PC-9 (cell line): ENCODE measurements at regions of chr20 and their contacts with region 1.

Region 1: DNA sequence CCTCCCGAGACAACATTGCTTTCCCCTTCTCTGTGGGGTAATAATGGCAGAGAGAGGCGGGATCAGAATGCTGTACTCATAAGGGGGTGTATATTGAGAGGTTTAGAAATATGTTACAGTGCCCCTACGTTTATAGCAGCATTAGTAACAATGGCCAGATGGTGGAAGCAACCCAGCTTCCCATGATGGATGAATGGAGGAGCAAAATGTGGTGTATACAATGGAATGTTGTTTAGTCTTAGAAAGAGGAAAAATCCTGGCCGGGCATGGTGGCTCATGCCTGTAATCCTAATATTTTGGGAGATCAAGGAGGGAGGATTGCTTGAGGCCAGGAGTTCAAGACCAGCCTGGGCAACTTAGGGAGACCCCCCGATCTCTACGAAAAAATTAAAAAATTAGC is 12.9 kb downstream of the BANF2 start:
- DNase-seq: no peak
- H3K4me3 ChIP-seq: no peak overlapping the region
- H3K27ac ChIP-seq: no peak overlapping the region
- H3K4me1 ChIP-seq: no peaks in the 10 kb centered on the region
- H3K27me3 ChIP-seq: no peaks in the 10 kb centered on the region; the same call in 1 of the 2 replicates
- CTCF ChIP-seq: no peak

Region 2: GRCh38 chr20:17752459-17752858 is 39.8 kb after region 1 on chr20:
- CTCF ChIA-PET with region 1: no interaction called
- POLR2A ChIA-PET with region 1: interaction called, 10 read pairs
- intact Hi-C with region 1: no loop called
- DNase-seq: no peak
- H3K4me3 ChIP-seq: no peak overlapping the region
- H3K27ac ChIP-seq: no peak overlapping the region
- H3K4me1 ChIP-seq: peaks cover 4% of the 10 kb centered on the region; the same call in 1 of the 2 replicates
- H3K27me3 ChIP-seq: peaks cover 41% of the 10 kb centered on the region
- CTCF ChIP-seq: no peak

Region 3: DNA sequence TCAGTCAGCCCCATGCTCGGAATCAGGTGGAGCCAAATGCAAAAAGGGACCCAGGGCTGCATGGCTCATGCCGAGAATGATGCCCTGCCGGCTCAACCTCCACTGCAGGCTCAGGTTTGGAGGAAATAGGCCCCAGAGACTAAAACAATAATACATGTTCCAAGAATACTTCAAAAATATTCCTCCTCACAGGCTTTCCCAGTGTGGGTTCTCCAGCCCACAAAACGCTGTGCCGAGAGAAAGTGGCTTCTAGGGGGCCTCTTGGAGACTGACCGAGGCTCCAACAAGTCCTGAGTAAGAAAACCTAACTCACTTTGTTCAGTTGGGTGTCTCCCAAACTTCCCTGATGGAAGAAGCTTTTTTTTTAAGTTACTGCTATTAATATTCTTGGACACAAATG is 60.9 kb after region 1 on chr20:
- CTCF ChIA-PET with region 1: no interaction called
- POLR2A ChIA-PET with region 1: no interaction called
- intact Hi-C with region 1: no loop called
- DNase-seq: no peak
- H3K4me3 ChIP-seq: no peak overlapping the region
- H3K27ac ChIP-seq: no peak overlapping the region
- H3K4me1 ChIP-seq: no peaks in the 10 kb centered on the region
- H3K27me3 ChIP-seq: no peaks in the 10 kb centered on the region
- CTCF ChIP-seq: no peak

Region 4: DNA sequence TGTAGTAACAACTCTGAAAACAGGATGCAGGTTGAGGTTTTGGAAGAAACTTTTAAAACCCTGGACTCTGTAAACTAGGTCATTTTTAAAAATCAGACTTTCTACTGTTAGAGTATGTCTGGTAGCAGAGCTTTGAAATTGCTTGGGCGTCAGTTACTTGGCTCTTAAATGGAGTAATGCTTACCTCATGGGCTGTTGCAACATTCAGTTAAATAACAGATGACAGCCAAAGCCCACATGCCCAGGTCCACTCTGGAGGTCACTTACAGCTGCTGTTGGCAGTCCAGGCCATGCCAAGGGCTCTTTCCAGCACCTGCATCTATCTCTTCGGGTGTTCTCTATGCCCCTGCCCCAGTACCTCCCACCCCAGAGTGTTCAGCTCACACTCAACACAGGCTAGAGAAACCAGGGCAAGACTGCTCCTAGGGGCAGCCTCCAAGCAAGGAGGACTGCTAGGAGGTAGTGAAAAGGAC is 83.4 kb after region 1 on chr20:
- CTCF ChIA-PET with region 1: no interaction called
- POLR2A ChIA-PET with region 1: no interaction called
- intact Hi-C with region 1: no loop called
- DNase-seq: no peak
- H3K4me3 ChIP-seq: no peak overlapping the region
- H3K27ac ChIP-seq: no peak overlapping the region
- H3K4me1 ChIP-seq: no peaks in the 10 kb centered on the region; the same call in 1 of the 2 replicates
- H3K27me3 ChIP-seq: no peaks in the 10 kb centered on the region; the same call in 1 of the 2 replicates
- CTCF ChIP-seq: no peak